Lower lobe of right lung (tissue), 2 donors: ENCODE measurements at regions of chr12 and their contacts with region 1.

Region 1: DNA sequence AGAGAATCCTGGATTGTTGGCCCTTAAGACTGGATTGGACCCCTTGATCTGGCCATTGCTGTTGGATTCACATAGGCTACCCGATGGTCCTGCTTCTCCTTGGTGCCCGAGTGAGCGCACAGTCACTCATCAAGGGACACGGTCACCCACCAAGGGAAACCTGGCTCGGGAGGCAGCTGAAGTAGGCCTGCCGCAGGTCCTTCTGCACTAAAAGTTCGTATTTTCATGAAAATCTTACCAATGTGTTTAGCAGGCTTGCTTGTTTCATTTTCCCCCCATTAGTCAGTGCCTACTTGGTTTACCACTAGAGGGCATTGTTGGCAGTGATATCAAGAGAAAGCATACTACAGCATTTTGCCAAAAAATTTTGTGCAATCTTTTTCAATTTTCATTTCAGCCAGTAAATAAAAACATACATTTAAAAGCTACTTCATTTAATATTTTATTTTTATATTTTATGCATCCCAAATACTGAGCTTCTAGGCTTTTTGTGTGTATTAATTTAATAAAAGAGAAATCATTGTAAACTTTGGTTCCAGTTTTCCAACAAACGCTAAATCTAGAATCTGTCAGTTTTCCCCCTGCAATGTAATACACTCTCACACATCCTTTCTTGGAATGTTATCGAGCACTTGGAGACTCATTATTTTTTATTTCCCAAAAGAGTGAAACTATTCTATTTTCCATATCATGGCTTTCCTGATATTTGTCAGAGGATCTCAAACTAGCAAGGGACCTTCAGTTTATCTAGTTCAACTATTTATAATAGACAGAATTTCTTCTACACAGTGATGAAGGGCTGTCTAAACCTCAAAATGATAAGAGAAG is 116.7 kb downstream of the LMNTD1 start:
- DNase-seq: no peak
- ATAC-seq: peak; percentile 68 to 74
- H3K4me3 ChIP-seq: peak overlapping the region; percentile 45
- H3K27ac ChIP-seq: no peak overlapping the region
- H3K4me1 ChIP-seq: no peaks in the 10 kb centered on the region
- H3K27me3 ChIP-seq: no peaks in the 10 kb centered on the region
- CTCF ChIP-seq: peak; percentile 88

Region 2: GRCh38 chr12:26028953-26029735 is 592.7 kb after region 1 on chr12:
- intact Hi-C with region 1: loop called (anchors 10 kb)
- DNase-seq: no peak
- ATAC-seq: peak; percentile 47 to 71
- H3K4me3 ChIP-seq: no peak overlapping the region
- H3K27ac ChIP-seq: no peak overlapping the region
- H3K4me1 ChIP-seq: peaks cover 20% of the 10 kb centered on the region
- H3K27me3 ChIP-seq: no peaks in the 10 kb centered on the region
- CTCF ChIP-seq: peak; percentile 83